ENCODE measurements at regions of chr10 and their contacts with region 1.

Region 1: GRCh38 chr10:69392481-69393000 is 24.2 kb downstream of the TACR2 start:
- H3K4me3 ChIP-seq: no peak overlapping the region
- H3K27ac ChIP-seq: no peak overlapping the region
- H3K4me1 ChIP-seq: no peaks in the 10 kb centered on the region
- CTCF ChIP-seq: peak; percentile 95

Region 2: GRCh38 chr10:69237528-69238159 is 154.9 kb before region 1 on chr10:
- CTCF ChIA-PET with region 1: interaction called, 147 read pairs
- POLR2A ChIA-PET with region 1: interaction called, 4 read pairs
- H3K4me3 ChIP-seq: no peak overlapping the region
- H3K27ac ChIP-seq: no peak overlapping the region
- H3K4me1 ChIP-seq: no peaks in the 10 kb centered on the region
- CTCF ChIP-seq: peak; percentile 79

Region 3: DNA sequence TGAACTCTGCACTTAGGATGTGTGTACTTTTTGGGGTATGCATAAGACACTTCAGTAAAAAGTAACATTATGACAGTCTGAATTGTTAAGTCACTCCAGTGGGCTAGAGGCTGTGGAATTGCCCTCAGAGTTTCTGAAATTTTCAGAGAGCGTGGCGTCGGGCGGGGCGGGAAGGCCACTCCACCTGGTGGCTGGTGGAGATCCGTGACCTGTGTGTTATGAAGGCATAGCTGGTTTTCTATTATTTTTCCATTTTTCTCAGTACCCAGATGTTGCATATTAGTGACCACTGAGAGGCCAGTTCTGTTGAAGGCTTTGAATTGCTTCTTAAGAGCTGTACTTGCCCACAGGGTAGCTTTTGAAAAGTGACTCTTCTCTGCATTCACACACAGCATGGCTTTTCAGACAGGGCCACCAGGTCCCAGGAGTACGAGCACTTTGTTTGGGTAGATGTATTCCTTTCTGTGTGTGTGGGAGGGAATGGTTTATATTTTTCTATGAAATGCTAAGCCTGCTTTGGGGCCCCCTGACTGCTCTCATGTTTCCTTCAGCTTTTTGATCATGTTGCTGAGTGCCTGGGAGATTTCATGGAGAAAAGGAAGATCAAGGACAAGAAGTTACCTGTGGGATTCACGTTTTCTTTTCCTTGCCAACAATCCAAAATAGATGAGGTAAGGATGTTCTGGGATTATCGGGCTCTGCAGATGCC is 28.2 kb before region 1 on chr10:
- CTCF ChIA-PET with region 1: interaction called, 11 read pairs
- POLR2A ChIA-PET with region 1: no interaction called
- H3K4me3 ChIP-seq: no peak overlapping the region
- H3K27ac ChIP-seq: no peak overlapping the region
- H3K4me1 ChIP-seq: no peaks in the 10 kb centered on the region
- CTCF ChIP-seq: no peak

Region 4: DNA sequence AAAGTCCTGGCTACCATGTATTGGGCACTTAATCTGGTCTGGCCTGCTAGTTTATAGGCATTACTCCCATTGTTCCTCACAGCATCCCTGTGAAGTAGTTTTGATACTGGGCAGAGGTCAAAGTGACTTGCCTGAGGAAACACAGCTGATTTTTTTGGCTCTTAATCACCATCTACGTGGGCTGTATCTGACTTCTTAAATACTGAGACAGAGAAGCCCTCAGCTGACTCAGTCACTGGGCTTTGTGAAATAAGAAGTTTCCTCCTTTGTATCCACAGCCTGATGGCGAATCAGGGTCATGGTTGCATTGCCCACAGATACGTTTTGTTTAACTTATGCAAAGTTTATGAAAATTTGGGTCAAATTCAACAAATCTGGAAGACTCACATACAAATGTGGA is 11.0 kb after region 1 on chr10:
- CTCF ChIA-PET with region 1: interaction called, 12 read pairs
- POLR2A ChIA-PET with region 1: no interaction called
- H3K4me3 ChIP-seq: no peak overlapping the region
- H3K27ac ChIP-seq: no peak overlapping the region
- H3K4me1 ChIP-seq: no peaks in the 10 kb centered on the region; the same call in 1 of the 2 replicates
- CTCF ChIP-seq: no peak

Measured in HEK293 (cell line).